OCI-LY7 (cell line): ENCODE measurements at regions of chr4 and their contacts with region 1.

Region 1: GRCh38 chr4:81546777-81547176 is 75.1 kb upstream of the RASGEF1B start:
- DNase-seq: no peak
- H3K4me3 ChIP-seq: no peak overlapping the region
- H3K27ac ChIP-seq: no peak overlapping the region
- H3K4me1 ChIP-seq: peaks cover under 1% of the 10 kb centered on the region
- CTCF ChIP-seq: no peak

Region 2: GRCh38 chr4:81531428-81531827 is 15.3 kb before region 1 on chr4:
- CTCF ChIA-PET with region 1: no interaction called
- POLR2A ChIA-PET with region 1: interaction called, 14 read pairs
- intact Hi-C with region 1: no loop called
- DNase-seq: no peak
- H3K4me3 ChIP-seq: no peak overlapping the region
- H3K27ac ChIP-seq: no peak overlapping the region
- H3K4me1 ChIP-seq: no peaks in the 10 kb centered on the region
- CTCF ChIP-seq: no peak